ENCODE measurements at regions of chr17 and their contacts with region 1.

Region 1: DNA sequence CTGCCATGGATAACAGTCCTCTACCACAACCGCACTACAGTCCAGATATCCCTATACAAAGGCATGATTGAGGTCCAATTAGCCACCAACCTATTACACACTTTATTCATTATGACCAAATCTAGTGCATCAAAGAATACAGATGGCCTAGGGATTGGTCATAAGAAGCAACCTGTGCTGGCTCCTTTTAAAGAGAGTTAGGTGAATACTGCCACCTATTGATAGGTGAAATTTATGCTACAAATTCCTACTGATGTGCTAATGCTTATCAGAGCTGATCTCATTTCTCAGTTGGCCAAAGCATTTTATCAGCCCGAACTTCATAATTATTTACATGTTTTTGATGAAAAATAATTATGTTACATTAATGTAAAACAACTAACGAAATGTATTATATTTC is 166.2 kb downstream of the ANKFN1 start:
- DNase-seq: no peak
- H3K4me3 ChIP-seq: no peak overlapping the region
- H3K27ac ChIP-seq: no peak overlapping the region
- H3K4me1 ChIP-seq: peaks cover 0 to 5% (median 0%) of the 10 kb centered on the region in 4 donors
- H3K27me3 ChIP-seq: peaks cover 0 to 9% (median 4%) of the 10 kb centered on the region in 4 donors
- CTCF ChIP-seq: peak; percentile 35 to 50 (median 45)
- EP300 ChIP-seq: no peak
- POLR2A ChIP-seq: no peak

Region 2: GRCh38 chr17:55845385-55845784 is 474.1 kb before region 1 on chr17:
- intact Hi-C with region 1: loop called (anchors 10 kb)
- DNase-seq: no peak
- H3K4me3 ChIP-seq: peak overlapping the region; percentile 13 to 51 (median 34)
- H3K27ac ChIP-seq: no peak overlapping the region
- H3K4me1 ChIP-seq: peaks cover 6 to 9% (median 6%) of the 10 kb centered on the region in 4 donors
- H3K27me3 ChIP-seq: no peaks in the 10 kb centered on the region
- CTCF ChIP-seq: peak in 2 of 3 experiments; percentile 55 to 62
- EP300 ChIP-seq: no peak
- POLR2A ChIP-seq: no peak

Region 3: DNA sequence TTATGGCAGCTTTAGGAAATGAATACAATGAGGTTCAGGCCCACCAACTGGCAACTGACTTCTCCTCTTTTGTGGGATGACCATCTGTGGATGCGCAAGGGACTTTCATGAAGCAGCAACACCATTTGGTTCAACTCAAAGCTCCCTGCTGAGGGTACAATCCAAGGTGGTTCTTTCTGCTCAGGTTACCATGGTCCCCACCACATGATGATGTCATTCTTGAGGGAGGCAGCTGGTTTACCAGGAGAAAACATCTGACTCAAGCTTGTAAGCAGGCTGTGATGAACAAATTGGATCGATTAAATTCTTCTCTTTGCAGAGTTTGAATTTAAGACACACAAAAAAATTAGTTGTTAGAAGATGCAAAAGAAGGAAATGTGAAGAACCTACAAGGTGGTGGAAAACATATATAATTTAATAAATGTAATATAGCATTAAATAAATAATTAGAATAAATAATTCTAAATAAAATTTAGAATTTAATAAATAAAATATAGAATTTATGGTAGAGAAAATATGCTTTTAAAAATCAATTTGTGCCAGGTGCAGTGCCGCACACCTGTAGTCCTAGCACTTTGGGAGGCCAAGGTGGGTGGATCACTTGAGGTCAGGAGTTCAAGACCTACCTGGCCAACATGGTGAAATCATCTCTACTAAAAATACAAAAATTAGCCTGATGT is 233.8 kb before region 1 on chr17:
- intact Hi-C with region 1: no loop called
- DNase-seq: no peak
- H3K4me3 ChIP-seq: no peak overlapping the region
- H3K27ac ChIP-seq: no peak overlapping the region
- H3K4me1 ChIP-seq: no peaks in the 10 kb centered on the region
- H3K27me3 ChIP-seq: no peaks in the 10 kb centered on the region
- CTCF ChIP-seq: no peak
- EP300 ChIP-seq: no peak
- POLR2A ChIP-seq: no peak

Region 4: GRCh38 chr17:56125830-56126819 is 193.4 kb before region 1 on chr17:
- intact Hi-C with region 1: loop called (anchors 5 kb)
- DNase-seq: no peak
- H3K4me3 ChIP-seq: no peak overlapping the region
- H3K27ac ChIP-seq: no peak overlapping the region
- H3K4me1 ChIP-seq: no peaks in the 10 kb centered on the region
- H3K27me3 ChIP-seq: no peaks in the 10 kb centered on the region
- CTCF ChIP-seq: peak; percentile 19 to 51 (median 32)
- EP300 ChIP-seq: no peak
- POLR2A ChIP-seq: no peak

Region 5: GRCh38 chr17:56292010-56292409 is 27.5 kb before region 1 on chr17:
- intact Hi-C with region 1: no loop called
- DNase-seq: peak; percentile 26
- H3K4me3 ChIP-seq: no peak overlapping the region
- H3K27ac ChIP-seq: no peak overlapping the region
- H3K4me1 ChIP-seq: peaks cover 0 to 20% (median 7%) of the 10 kb centered on the region in 4 donors
- H3K27me3 ChIP-seq: no peaks in the 10 kb centered on the region
- CTCF ChIP-seq: no peak
- EP300 ChIP-seq: no peak
- POLR2A ChIP-seq: no peak

Region 6: DNA sequence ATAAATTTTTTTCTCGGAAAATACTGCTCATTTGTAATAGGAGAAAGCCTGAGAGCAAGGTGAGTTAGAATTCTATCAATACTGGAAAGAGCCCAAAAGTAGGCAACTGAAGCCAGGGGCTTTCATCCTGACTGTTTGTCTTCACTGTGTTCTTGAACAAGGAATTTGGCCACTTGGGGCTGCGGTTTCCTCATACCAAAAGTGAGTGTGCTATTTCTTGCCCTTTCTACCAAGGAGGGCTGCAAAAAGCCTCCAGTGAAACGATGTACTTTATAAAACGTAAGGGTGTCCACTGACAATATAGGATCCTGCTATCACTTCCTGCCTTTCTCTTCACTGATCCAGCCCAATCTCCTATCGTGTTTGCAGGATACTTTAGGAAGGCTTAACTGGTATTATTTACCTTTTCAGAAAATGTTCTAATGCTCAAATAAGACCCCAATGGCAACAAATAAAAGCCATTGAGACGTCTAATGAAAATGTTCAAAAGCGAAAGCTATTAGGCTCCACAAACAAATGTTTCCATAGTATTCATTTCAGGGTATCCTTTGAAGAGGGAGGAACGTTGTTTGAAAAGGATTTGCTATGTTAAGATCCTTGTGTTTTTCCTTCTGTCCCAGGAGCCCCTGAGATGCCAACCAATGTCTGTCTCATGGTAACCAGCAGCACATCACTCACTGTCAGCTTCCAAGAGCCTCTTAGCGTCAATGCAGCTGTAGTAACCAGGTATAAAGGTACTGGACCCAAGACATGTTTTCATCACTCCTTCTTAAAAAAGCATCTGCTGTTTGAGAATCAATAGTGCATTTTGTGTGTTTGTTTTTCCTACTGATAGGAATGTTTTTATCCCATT is 54.7 kb after region 1 on chr17:
- intact Hi-C with region 1: no loop called
- DNase-seq: no peak
- H3K4me3 ChIP-seq: no peak overlapping the region
- H3K27ac ChIP-seq: no peak overlapping the region
- H3K4me1 ChIP-seq: no peaks in the 10 kb centered on the region
- H3K27me3 ChIP-seq: no peaks in the 10 kb centered on the region
- CTCF ChIP-seq: no peak
- EP300 ChIP-seq: no peak
- POLR2A ChIP-seq: no peak